ENCODE measurements at regions of chr10 and their contacts with region 1.

Region 1: DNA sequence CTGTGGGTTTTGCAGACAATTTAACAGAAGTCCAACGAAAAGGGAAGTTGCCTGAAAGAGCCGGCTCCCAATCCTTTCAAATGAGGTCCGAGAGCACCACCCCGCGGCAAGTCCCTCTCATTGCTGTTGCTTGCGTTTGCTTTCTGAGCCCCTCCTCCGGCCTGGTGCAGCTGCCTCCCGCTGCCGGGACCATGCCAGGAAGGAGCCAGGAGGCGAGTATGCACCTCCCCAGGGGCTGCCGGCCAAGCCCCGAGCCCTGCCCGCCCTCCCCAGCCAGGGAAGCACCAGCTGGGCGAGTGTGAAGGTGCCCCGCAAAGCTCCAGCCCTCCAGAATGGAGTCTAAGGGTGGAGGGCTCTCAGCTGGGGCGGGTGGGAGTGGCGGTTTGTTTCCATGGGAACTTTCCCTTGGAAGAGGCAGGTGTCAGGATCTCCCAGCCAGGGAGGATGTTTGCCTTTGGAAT is 25.8 kb upstream of the PPP2R2D start:
- DNase-seq: peak; percentile 88
- H3K4me3 Mint-ChIP-seq: no peak overlapping the region
- H3K27ac Mint-ChIP-seq: no peak overlapping the region
- H3K4me1 Mint-ChIP-seq: peaks cover 3% of the 10 kb centered on the region
- H3K27me3 Mint-ChIP-seq: peaks cover 13% of the 10 kb centered on the region

Region 2: GRCh38 chr10:131242007-131242406 is 633.0 kb before region 1 on chr10:
- intact Hi-C with region 1: loop called (anchors 5 kb)
- DNase-seq: peak; percentile 60
- H3K4me3 Mint-ChIP-seq: no peak overlapping the region
- H3K27ac Mint-ChIP-seq: no peak overlapping the region
- H3K4me1 Mint-ChIP-seq: no peaks in the 10 kb centered on the region
- H3K27me3 Mint-ChIP-seq: no peaks in the 10 kb centered on the region

Region 3: GRCh38 chr10:131436458-131436857 is 438.6 kb before region 1 on chr10:
- intact Hi-C with region 1: no loop called
- DNase-seq: no peak
- H3K4me3 Mint-ChIP-seq: no peak overlapping the region
- H3K27ac Mint-ChIP-seq: no peak overlapping the region
- H3K4me1 Mint-ChIP-seq: no peaks in the 10 kb centered on the region
- H3K27me3 Mint-ChIP-seq: no peaks in the 10 kb centered on the region

Region 4: DNA sequence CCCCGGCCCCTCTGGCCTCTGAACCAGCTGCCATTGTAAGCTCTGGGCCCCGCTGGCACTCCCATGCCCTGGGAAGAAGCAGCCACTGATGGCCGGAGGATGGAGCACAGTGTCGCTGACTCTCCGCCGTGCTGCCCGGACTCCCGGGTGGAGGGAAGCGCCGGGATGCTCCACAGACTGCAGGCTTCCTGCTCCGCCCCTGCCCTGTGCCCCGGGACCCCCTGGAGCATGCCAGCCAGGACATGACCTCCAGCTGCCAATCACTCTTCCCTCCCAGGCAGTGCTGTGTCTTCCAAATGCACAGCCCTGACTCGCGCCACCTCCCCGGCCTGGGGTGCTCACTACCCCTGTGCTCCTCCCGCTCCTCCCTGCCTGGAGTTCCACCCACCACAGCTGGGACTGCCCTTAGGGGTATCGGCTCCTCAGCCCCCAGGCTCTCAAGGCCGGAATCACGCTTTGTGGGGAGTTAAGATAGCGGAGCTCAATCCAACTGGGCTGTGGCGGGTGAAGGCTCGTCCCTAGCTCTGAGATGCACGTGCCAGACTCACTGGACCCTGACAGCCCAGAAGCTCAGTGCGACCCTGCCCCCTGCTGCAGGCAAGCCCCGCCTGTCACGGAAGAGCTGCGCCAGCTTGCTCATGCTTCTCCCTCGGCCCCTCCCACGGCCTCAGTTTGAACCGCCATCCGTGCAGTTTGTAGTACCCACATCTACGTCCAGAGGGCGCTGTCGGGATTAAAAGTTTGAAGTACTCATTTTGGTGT is 421.2 kb before region 1 on chr10:
- intact Hi-C with region 1: loop called (anchors 5 kb)
- DNase-seq: peak; percentile 91
- H3K4me3 Mint-ChIP-seq: peak overlapping the region; percentile 17
- H3K27ac Mint-ChIP-seq: no peak overlapping the region
- H3K4me1 Mint-ChIP-seq: no peaks in the 10 kb centered on the region
- H3K27me3 Mint-ChIP-seq: peaks cover 12% of the 10 kb centered on the region

Region 5: DNA sequence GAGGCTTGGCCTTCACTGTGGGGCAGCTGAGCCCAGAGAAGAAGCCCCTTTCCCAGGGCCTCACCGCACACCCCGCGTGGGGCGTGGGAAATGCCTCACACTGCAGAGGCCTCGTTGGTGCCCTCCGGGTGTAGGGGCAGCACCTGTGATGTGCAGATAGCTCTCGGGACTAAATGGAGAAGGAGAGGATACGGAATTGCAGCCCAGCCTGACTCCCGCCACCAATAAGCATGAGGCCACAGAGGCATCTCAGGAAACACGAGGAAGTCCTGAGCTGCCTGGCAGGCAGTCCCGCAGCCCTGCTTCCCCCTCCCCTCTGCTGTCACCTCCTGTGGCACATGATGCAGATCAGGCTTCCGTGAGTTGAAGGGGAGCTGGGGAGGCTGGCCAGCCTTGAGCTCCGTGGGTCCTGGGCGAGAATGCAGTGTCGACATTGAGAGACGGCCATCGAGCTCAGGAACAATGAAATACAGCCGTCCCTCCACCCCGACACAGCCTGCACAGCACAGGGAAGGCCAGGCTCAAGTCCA is 33.8 kb before region 1 on chr10:
- intact Hi-C with region 1: no loop called
- DNase-seq: no peak
- H3K4me3 Mint-ChIP-seq: no peak overlapping the region
- H3K27ac Mint-ChIP-seq: no peak overlapping the region
- H3K4me1 Mint-ChIP-seq: no peaks in the 10 kb centered on the region
- H3K27me3 Mint-ChIP-seq: no peaks in the 10 kb centered on the region

Region 6: GRCh38 chr10:132257271-132257670 is 382.2 kb after region 1 on chr10:
- intact Hi-C with region 1: no loop called
- DNase-seq: no peak
- H3K4me3 Mint-ChIP-seq: no peak overlapping the region
- H3K27ac Mint-ChIP-seq: no peak overlapping the region
- H3K4me1 Mint-ChIP-seq: no peaks in the 10 kb centered on the region
- H3K27me3 Mint-ChIP-seq: peaks cover under 1% of the 10 kb centered on the region

Measured in activated CD4-positive, alpha-beta T cell treated with anti-CD3 and anti-CD28 coated beads, Interleukin-2, amount 10 ng/mL, durations not matched to agents 24 days and 14 days (primary cell).